ENCODE measurements at regions of chr9 and their contacts with region 1.

Region 1: GRCh38 chr9:33473643-33474352 is at the start of gene NOL6:
- DNase-seq: peak; percentile 96
- ATAC-seq: peak; percentile 100
- total RNA-seq, gene NOL6: 13.0 TPM

Region 2: GRCh38 chr9:32550562-32551433 is 923.0 kb before region 1 on chr9:
- intact Hi-C with region 1: loop called (anchors 5 kb)
- DNase-seq: peak; percentile 96
- ATAC-seq: peak; percentile 87

Region 3: DNA sequence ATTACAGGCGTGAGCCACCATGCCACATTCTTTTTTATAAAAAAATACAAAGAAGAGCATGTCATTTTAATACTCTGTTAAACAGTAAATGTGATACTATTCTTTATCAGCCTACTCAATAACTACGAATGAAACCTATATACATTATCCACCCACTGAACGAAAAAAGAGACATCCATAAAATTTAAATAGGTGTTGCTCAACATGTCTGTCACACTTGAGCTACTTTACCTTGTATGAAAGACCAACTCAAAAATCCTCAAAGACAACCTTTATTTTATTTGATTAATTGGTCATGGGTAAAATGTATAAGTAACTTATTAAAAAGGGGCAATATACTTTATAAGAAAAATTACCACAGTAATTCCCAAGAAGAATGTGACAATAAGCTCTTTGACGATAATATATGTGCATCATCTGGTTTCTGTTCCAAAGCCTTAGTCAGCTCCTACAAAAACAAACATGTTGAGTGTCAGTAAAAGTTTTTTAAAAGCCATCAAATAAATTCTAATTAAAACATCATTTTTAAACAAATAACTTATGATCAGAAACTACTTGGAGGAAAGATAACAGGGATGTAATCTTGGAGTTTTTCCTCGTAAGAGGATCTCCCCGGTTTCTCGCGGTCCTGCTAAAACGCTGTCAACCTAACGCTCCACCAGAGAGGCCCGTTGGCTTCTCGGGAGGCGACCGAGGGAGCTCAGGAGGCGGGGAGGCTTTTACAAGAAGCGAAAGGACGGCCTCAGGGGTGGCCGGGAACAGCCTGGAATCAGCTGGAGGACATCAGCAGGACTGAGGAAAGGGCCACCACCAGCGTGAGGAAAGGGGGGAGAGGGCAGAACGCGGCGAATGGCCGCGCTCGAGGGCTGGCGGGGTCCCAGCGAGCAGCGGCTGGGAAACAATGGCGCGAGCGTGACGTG is 36.7 kb after region 1 on chr9:
- intact Hi-C with region 1: no loop called
- DNase-seq: peak; percentile 85
- ATAC-seq: peak; percentile 95

Region 4: GRCh38 chr9:33524306-33524947 is 50.6 kb after region 1 on chr9:
- intact Hi-C with region 1: no loop called
- DNase-seq: no peak
- ATAC-seq: no peak

Measured in Right ventricle myocardium inferior (tissue), 1 donor.